ENCODE measurements at regions of chr1 and their contacts with region 1.

Region 1: GRCh38 chr1:119808972-119809550 is 2.2 kb downstream of the REG4 start:
- DNase-seq: no peak
- H3K4me3 ChIP-seq: no peak overlapping the region
- H3K27me3 ChIP-seq: peaks cover 7% of the 10 kb centered on the region
- CTCF ChIP-seq: peak; percentile 98

Region 2: GRCh38 chr1:119795261-119796200 is 13.5 kb before region 1 on chr1:
- CTCF ChIA-PET with region 1: interaction called, 17 read pairs
- POLR2A ChIA-PET with region 1: no interaction called
- DNase-seq: no peak
- H3K4me3 ChIP-seq: no peak overlapping the region
- H3K27me3 ChIP-seq: peaks cover 5% of the 10 kb centered on the region
- CTCF ChIP-seq: no peak

Region 3: DNA sequence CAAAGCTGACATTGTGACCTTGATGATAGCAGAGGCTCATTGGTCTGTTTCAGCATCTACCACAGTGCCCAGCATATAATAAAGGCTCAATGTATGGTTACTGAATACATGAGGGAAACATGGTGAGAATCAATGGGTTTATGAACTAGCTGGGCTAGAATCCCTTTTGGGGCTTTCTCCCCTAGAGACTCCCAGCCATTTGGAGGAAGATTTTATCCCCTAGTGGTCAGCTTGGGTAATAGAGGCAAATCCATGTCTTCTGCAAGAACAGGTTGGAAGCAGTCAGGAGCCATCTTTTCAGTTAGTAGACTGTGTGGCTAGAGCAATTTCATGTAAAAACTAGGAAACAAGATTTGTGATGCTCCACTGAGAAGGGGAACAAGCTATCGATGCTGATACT is 17.9 kb after region 1 on chr1:
- CTCF ChIA-PET with region 1: interaction called, 15 read pairs
- POLR2A ChIA-PET with region 1: no interaction called
- DNase-seq: no peak
- H3K4me3 ChIP-seq: no peak overlapping the region
- H3K27me3 ChIP-seq: peaks cover 3% of the 10 kb centered on the region; the same call in 1 of the 2 replicates
- CTCF ChIP-seq: peak; percentile 20; the same call in 1 of the 2 replicates

Region 4: GRCh38 chr1:119859647-119860046 is 50.6 kb after region 1 on chr1:
- CTCF ChIA-PET with region 1: interaction called, 11 read pairs
- POLR2A ChIA-PET with region 1: no interaction called
- DNase-seq: no peak
- H3K4me3 ChIP-seq: no peak overlapping the region
- H3K27me3 ChIP-seq: no peaks in the 10 kb centered on the region
- CTCF ChIP-seq: no peak

Region 5: DNA sequence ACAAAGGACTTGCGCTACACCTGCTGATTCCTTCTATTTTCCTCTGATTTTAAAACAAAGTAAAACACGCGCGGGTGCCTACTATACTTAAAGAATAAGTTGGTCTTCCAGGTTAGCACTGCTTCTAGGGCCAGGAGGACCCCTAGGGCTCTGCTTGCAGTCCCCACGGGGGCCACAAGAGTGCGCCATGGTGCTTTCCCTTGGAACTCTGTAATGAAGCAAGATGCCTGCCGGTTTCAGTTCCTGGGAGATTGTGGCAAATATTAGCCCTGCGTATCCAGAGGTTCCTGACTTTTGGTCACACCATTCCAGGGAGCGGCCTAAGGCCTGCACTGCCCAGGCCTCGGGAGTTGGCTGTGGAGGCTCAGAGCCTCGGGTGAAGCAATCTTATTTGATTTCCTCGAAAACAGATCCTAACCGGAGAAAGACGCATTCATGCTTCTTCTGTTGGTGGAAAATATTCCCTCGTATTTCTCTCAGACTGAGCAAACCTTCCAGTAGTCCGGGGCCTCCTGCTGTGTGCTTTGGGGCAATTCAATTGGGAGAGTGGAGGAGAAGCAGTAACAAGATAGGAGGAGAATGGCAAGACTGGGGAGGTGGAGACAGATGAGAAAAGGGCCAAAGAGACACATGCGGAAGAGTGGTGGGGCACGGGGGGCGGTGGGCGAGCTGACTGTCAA is 62.0 kb after region 1 on chr1:
- CTCF ChIA-PET with region 1: interaction called, 16 read pairs
- POLR2A ChIA-PET with region 1: no interaction called
- DNase-seq: no peak
- H3K4me3 ChIP-seq: no peak overlapping the region
- H3K27me3 ChIP-seq: no peaks in the 10 kb centered on the region
- CTCF ChIP-seq: peak; percentile 98